ENCODE measurements at regions of chr20 and their contacts with region 1.

Region 1: DNA sequence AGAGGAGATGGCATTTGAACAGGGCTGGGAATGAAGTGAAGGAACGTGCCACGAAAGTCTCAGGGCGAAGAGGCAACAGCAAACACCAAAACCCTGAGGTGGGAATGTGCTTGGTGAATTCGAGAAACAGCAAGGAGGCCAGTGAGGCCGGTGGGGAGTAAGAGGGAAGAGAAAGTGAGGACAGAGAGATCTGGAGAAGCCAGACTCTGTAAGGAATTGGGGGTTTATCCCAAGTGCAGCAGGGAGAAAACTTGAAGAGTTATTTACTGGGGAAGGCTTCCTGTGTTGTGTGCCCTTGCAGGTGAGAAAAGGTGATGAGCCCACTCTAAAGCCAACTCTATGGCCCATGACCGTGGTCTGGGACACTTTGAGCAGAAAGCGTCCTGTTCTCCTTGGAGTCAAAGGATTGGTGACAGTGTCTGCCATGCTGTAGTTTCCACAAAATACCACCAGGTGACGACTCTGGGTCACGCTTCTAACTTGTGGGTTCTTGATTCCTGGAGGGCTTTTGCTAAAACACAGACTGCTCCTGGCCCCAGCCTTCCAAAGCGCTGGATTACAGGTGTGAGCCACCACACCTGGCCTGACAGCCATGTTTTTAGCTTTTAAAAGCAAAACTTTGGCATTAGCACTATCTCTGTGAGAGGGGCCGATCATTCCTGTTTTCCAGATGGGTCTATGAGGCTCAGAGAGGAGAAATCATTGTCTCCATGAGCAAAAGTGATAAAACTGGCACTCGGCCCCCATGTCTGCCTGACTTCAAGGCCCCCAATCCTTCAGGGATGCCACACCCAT is 18.0 kb upstream of the CSNK2A1 start:
- DNase-seq: peak; percentile 84
- CTCF ChIP-seq: peak; percentile 95

Region 2: DNA sequence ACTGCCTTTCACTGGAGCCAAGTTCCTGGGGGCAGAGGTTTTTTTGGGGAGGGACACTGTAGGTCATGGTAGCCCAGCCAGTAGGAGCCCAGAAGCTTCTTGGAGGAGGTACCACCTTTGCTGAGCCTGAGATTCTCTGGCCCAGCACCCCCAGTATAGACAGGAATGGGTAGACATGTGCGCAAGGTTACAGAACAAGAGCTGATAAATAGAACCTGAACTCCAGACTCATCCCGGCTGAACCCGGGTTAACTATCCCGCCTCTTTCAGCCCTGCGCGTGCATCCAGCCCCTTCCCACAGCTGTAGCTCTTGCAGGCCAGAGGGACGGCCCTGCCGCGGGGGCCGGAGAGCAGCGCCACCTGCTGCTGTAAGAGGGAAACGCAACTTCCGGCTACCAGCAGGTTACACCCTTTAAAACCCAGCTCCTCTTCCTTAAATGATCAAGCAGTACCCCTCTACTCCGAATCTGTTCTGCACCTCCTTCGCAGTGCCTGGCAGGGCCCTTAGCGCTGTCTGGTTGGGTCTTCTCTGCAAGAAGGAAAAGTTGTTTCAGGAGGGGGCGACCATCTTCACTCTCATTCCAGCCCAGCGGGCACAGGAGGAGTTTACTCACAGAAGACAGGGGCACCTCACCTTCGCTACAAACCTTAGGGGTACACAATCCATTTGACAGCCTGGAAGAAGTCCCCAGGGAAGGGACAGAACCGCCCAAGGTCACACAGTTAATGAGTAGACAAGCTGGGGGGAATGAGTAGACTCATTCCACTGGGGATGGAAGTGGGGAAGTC is 83.9 kb after region 1 on chr20:
- in situ Hi-C with region 1: loop called (anchors 10 kb)
- DNase-seq: peak; percentile 93
- CTCF ChIP-seq: peak; percentile 95

Region 3: GRCh38 chr20:728248-728944 is 166.8 kb after region 1 on chr20:
- in situ Hi-C with region 1: loop called (anchors 25 kb)
- DNase-seq: peak; percentile 81
- CTCF ChIP-seq: peak; percentile 74